ENCODE measurements at regions of chr20 and their contacts with region 1.

Region 1: DNA sequence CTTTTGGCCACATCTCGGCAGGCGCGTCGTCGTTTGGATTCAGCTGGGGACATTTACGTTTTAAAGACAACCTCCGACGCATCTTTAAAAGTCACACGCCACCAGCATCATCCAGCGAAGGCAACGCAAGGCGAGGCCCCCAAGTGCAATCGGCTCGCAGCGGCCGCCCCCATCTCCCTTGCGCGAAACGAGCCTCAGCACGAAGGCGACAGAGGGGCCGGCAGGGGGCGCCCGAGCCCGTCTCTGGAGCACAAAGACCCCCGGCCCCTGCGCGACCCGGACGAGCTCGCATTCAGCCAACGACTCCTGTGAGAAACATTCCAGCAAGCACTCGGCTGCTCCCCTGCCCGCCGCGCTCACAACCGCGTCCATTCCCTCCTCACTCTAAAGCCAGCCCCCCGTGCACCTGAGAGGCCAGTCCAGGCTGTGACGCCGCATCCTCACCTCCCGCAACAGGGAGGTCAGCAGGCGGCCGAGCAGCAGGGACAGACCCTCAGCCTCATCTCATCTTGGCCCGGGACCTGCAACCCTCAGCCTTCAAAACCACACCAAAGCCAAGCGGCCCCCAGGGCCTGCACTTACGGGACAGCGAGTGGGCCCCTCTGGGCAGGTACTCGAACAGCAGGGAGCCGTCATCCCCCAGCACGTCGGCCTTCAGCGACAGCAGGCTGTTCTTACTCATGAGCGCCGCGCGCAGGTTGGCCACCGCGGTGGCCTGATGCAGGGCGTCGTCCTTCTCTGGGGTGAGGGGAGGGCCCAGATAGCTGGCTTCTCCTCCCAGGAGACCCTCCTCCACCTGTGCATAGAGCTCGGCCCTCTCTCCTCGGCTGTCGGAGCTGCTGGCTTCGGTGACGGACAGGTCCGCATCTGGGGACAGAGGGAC is 35.8 kb downstream of the SLC2A4RG start:
- DNase-seq: peak in 1 of 2 experiments; percentile 95
- H3K4me3 ChIP-seq: peak overlapping the region; percentile 12 to 62 (median 46); a peak in 7 of 8 replicates
- H3K27ac ChIP-seq: no peak overlapping the region
- H3K4me1 ChIP-seq: peaks cover 0 to 9% (median 6%) of the 10 kb centered on the region in 4 experiments; a peak in 5 of 7 replicates
- H3K27me3 ChIP-seq: no peaks in the 10 kb centered on the region
- CTCF ChIP-seq: peak; percentile 72 to 81 (median 76)
- EP300 ChIP-seq: no peak
- POLR2A ChIP-seq: no peak
- RAD21 ChIP-seq: peak; percentile 70 to 80

Region 2: GRCh38 chr20:63696306-63696627 is 79.1 kb before region 1 on chr20:
- CTCF ChIA-PET with region 1: no interaction called
- POLR2A ChIA-PET with region 1: no interaction called
- DNase-seq: peak in 1 of 2 experiments; percentile 69
- H3K4me3 ChIP-seq: peak overlapping the region in 1 of 4 experiments; percentile 45; a peak in 2 of 8 replicates
- H3K27ac ChIP-seq: no peak overlapping the region
- H3K4me1 ChIP-seq: peaks cover 0 to 12% (median 7%) of the 10 kb centered on the region in 4 experiments; a peak in 4 of 7 replicates
- H3K27me3 ChIP-seq: no peaks in the 10 kb centered on the region
- CTCF ChIP-seq: no peak
- EP300 ChIP-seq: no peak
- POLR2A ChIP-seq: peak in 1 of 2 experiments; percentile 49; a peak in 1 of 3 replicates
- RAD21 ChIP-seq: no peak

Region 3: DNA sequence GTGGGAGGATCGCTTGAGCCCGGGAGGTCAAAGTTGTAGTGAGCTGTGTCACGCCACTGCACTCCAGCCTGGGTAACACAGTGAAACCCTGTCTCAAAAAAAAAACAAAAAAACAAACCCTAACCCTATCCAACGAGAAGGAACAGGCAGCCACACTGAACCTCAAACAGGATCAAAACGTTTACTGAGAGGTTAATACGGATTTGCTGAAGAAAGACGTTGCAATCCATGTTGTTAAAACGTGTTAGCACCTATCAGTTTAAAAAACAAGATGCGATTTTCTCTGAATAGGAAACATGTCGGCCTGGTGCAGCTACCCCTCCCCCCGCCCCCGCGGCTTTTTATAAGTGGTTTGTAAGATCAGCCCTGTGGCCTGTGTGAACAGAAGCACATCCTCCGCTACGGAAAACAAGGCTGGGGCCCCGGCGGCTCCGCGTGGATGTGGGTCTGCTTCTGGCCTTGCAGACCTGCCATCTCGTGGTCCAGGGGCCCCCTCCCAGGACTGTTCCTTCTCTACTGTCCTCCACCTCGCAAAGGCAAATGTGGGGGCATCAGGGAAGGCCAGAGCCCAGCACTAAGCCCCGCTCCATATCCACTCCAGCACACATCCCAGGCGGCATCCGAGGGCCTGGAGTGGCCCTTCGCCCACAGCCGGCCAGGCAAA is 24.4 kb before region 1 on chr20:
- CTCF ChIA-PET with region 1: interaction called, 17 read pairs
- POLR2A ChIA-PET with region 1: interaction called, 3 read pairs
- DNase-seq: no peak
- H3K4me3 ChIP-seq: no peak overlapping the region
- H3K27ac ChIP-seq: no peak overlapping the region
- H3K4me1 ChIP-seq: peaks cover 0 to 20% (median 4%) of the 10 kb centered on the region in 4 experiments; a peak in 6 of 7 replicates
- H3K27me3 ChIP-seq: no peaks in the 10 kb centered on the region
- CTCF ChIP-seq: no peak
- EP300 ChIP-seq: no peak
- POLR2A ChIP-seq: no peak
- RAD21 ChIP-seq: no peak

Region 4: GRCh38 chr20:63810730-63811494 is 35.6 kb after region 1 on chr20:
- CTCF ChIA-PET with region 1: interaction called, 12 read pairs
- POLR2A ChIA-PET with region 1: interaction called, 3 read pairs
- DNase-seq: no peak
- H3K4me3 ChIP-seq: no peak overlapping the region
- H3K27ac ChIP-seq: no peak overlapping the region
- H3K4me1 ChIP-seq: peaks cover 0 to 4% (median 1%) of the 10 kb centered on the region in 4 experiments; a peak in 4 of 7 replicates
- H3K27me3 ChIP-seq: no peaks in the 10 kb centered on the region
- CTCF ChIP-seq: no peak
- EP300 ChIP-seq: no peak
- POLR2A ChIP-seq: no peak
- RAD21 ChIP-seq: no peak

Region 5: GRCh38 chr20:63834491-63834880 is 59.1 kb after region 1 on chr20:
- CTCF ChIA-PET with region 1: no interaction called
- POLR2A ChIA-PET with region 1: no interaction called
- DNase-seq: no peak
- H3K4me3 ChIP-seq: no peak overlapping the region; a peak in 1 of 8 replicates
- H3K27ac ChIP-seq: no peak overlapping the region
- H3K4me1 ChIP-seq: peaks cover 1 to 28% (median 16%) of the 10 kb centered on the region in 4 experiments
- H3K27me3 ChIP-seq: peaks cover 14 to 29% (median 23%) of the 10 kb centered on the region in 4 experiments; a peak in 6 of 7 replicates
- CTCF ChIP-seq: no peak
- EP300 ChIP-seq: no peak
- POLR2A ChIP-seq: no peak
- RAD21 ChIP-seq: no peak

Region 6: DNA sequence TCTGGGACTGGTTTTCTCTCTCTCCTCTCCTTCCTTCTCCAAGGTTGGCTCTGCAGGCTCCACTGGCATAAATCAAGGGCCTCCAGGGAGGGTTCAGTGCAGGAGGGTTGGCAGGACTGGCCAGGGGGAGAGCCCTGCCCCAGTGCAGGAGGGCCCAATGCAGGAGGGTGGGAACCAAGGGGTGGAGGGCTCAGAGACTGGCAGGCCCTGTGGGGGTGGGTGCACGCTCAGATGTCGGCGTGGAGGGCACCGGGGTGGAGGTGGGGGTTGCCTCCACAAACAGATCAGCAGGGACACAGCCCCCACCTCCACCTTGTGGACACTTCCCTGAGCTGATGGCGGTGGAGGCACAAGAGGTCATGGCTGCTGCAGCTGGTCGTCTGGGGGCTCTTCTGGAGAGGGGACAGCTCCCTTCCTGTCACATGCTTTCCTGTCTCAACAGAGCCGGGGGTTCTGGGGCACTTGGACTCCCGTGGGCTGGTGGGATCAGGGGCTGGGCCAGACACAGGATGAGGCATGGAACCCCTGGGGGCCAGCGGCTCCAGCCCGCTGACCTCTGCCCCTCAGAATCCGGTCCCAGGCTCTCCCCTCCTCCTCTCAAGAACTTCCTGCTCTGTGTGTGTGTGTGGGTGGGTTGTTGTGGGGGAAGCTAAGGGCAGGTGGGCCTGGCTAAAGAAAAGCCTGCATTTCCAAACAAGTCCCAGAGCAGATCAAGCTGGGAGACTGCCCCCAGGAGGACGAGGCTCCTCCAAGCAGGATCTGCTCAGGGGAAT is 83.2 kb after region 1 on chr20:
- CTCF ChIA-PET with region 1: interaction called, 59 read pairs
- POLR2A ChIA-PET with region 1: interaction called, 22 read pairs
- DNase-seq: peak in 1 of 2 experiments; percentile 67
- H3K4me3 ChIP-seq: peak overlapping the region in 2 of 4 experiments; percentile 14 to 29; a peak in 3 of 8 replicates
- H3K27ac ChIP-seq: no peak overlapping the region; the same call in 1 of the 2 replicates
- H3K4me1 ChIP-seq: peaks cover 7 to 49% (median 43%) of the 10 kb centered on the region in 4 experiments
- H3K27me3 ChIP-seq: no peaks in the 10 kb centered on the region
- CTCF ChIP-seq: peak; percentile 36 to 58 (median 54)
- EP300 ChIP-seq: peak in 1 of 2 experiments; percentile 21; a peak in 1 of 3 replicates
- POLR2A ChIP-seq: no peak
- RAD21 ChIP-seq: peak; percentile 51 to 61; a peak in 3 of 4 replicates

Region 7: DNA sequence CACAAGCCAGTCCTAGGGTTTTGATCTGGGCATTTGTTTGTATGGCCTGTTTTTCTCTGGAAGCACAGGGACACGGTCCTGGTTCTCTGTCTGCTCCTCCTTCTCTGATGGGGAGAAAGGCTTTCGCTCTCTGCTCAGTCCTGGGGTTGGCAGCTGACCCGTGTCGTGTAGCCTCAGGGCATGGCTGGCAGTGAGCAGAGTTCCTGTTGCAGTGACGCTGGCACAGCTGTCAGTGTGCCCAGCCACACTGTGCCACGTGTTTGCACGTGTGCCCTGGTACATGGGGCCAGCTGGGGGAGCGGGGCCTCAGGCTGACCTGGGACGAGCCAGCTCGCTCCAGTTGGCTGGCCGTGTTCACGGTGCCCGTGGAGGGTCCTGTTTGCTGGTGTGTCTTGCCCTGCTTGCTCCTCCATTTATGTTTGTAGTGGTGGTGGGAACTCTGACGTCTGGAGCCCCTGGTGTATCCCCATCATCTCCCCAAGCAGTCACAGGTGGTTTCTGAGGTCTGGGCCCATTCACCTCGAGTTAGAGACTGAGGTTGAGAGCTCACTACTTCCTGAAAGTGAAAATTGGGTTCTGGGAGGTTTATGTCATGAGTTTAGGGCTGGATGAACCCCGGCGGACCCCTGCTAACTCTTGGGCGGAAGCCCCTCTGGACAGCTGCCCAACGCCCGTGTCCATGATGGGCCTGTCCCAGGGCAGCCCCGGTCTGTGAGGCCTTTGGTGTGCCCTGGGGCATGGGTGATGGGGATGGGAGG is 109.3 kb after region 1 on chr20:
- CTCF ChIA-PET with region 1: interaction called, 18 read pairs
- POLR2A ChIA-PET with region 1: interaction called, 3 read pairs
- DNase-seq: no peak
- H3K4me3 ChIP-seq: no peak overlapping the region
- H3K27ac ChIP-seq: no peak overlapping the region
- H3K4me1 ChIP-seq: no peaks in the 10 kb centered on the region
- H3K27me3 ChIP-seq: no peaks in the 10 kb centered on the region
- CTCF ChIP-seq: no peak
- EP300 ChIP-seq: no peak
- POLR2A ChIP-seq: no peak
- RAD21 ChIP-seq: no peak

Region 8: DNA sequence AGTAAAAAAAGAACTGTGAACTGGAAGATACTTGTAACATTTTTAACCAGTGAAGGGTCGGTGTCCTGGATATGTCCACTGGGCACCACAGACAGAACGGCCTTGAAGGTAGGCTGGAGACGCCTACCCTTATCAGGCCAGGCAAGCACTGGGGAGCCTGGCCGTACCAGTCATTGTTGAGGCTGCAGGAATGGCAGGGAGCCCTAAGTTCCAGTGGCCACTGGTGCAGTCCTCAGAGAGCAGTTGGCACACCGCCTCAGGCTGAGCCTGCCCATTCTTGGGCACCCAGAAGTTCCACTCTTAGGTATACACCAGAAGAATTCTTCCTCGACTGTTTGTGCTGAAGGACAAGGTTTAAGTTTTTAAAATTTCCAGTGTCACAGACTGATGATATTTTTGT is 140.1 kb after region 1 on chr20:
- CTCF ChIA-PET with region 1: no interaction called
- POLR2A ChIA-PET with region 1: no interaction called
- DNase-seq: no peak
- H3K4me3 ChIP-seq: no peak overlapping the region
- H3K27ac ChIP-seq: no peak overlapping the region
- H3K4me1 ChIP-seq: no peaks in the 10 kb centered on the region; a peak in 2 of 7 replicates
- H3K27me3 ChIP-seq: no peaks in the 10 kb centered on the region
- CTCF ChIP-seq: no peak
- EP300 ChIP-seq: no peak
- POLR2A ChIP-seq: no peak
- RAD21 ChIP-seq: no peak

Region 9: GRCh38 chr20:63962426-63963347 is 187.3 kb after region 1 on chr20:
- CTCF ChIA-PET with region 1: no interaction called
- POLR2A ChIA-PET with region 1: no interaction called
- DNase-seq: no peak
- H3K4me3 ChIP-seq: no peak overlapping the region
- H3K27ac ChIP-seq: no peak overlapping the region
- H3K4me1 ChIP-seq: peaks cover 0 to 19% (median 12%) of the 10 kb centered on the region in 4 experiments; a peak in 6 of 7 replicates
- H3K27me3 ChIP-seq: no peaks in the 10 kb centered on the region
- CTCF ChIP-seq: no peak
- EP300 ChIP-seq: no peak
- POLR2A ChIP-seq: no peak
- RAD21 ChIP-seq: no peak